ENCODE measurements at regions of chr15 and their contacts with region 1.

Region 1: GRCh38 chr15:76840830-76841460 is 64.2 kb downstream of the SCAPER start:
- DNase-seq: no peak
- H3K4me3 Mint-ChIP-seq: no peak overlapping the region
- H3K27ac Mint-ChIP-seq: no peak overlapping the region
- H3K4me1 Mint-ChIP-seq: peaks cover 3% of the 10 kb centered on the region
- H3K27me3 Mint-ChIP-seq: no peaks in the 10 kb centered on the region

Region 2: GRCh38 chr15:76642671-76643070 is 198.3 kb before region 1 on chr15:
- intact Hi-C with region 1: loop called (anchors 5 kb)
- DNase-seq: no peak
- H3K4me3 Mint-ChIP-seq: no peak overlapping the region
- H3K27ac Mint-ChIP-seq: no peak overlapping the region
- H3K4me1 Mint-ChIP-seq: no peaks in the 10 kb centered on the region
- H3K27me3 Mint-ChIP-seq: no peaks in the 10 kb centered on the region